HepG2 (cell line): ENCODE measurements at regions of chr22 and their contacts with region 1.

Region 1: GRCh38 chr22:50293441-50294318 is 13.8 kb downstream of the PLXNB2 start:
- DNase-seq: peak; percentile 87
- ATAC-seq: peak; percentile 77
- H3K4me3 ChIP-seq: peak overlapping the region; percentile 44 to 74 (median 73); a peak in 5 of 6 replicates
- H3K27ac ChIP-seq: peak overlapping the region; percentile 94
- H3K4me1 ChIP-seq: peaks cover 65% of the 10 kb centered on the region
- H3K27me3 ChIP-seq: no peaks in the 10 kb centered on the region
- CTCF ChIP-seq: peak; percentile 54
- EP300 ChIP-seq: peak; percentile 34 to 71; a peak in 3 of 4 replicates
- POLR2A ChIP-seq: peak; percentile 72 to 76
- RAD21 ChIP-seq: peak; percentile 62

Region 2: DNA sequence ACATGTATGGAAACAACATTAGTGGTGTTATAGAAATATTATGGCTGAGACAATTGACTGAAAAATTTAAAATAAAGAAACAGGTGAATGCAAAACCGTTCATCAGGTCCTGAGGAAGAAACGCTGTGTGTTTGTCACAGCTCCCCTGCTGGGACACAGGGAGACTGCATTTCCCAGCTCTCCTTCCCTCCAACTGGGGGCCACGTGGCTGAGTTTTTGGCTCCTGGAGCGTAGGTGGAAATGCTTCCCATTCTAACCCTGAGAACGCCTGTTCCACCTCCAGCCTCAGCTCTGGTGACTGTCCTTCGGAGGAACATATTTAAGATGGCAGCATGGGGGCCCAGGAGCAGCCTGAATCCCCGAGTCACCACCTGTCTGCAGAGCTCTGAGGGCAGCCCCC is 864.6 kb before region 1 on chr22:
- CTCF ChIA-PET with region 1: no interaction called
- POLR2A ChIA-PET with region 1: no interaction called
- in situ Hi-C with region 1: no loop called
- intact Hi-C with region 1: loop called (anchors 10 kb)
- DNase-seq: no peak
- ATAC-seq: peak; percentile 51; the same call in 2 of the 3 replicates
- H3K4me3 ChIP-seq: no peak overlapping the region
- H3K27ac ChIP-seq: no peak overlapping the region
- H3K4me1 ChIP-seq: no peaks in the 10 kb centered on the region
- H3K27me3 ChIP-seq: peaks cover 5 to 32% of the 10 kb centered on the region in 2 experiments
- CTCF ChIP-seq: no peak
- EP300 ChIP-seq: no peak
- POLR2A ChIP-seq: no peak
- RAD21 ChIP-seq: no peak

Region 3: GRCh38 chr22:50250555-50251476 is 42.9 kb before region 1 on chr22 and contains the start of gene HDAC10:
- CTCF ChIA-PET with region 1: no interaction called
- POLR2A ChIA-PET with region 1: interaction called, 11 read pairs
- in situ Hi-C with region 1: no loop called
- intact Hi-C with region 1: no loop called
- DNase-seq: peak; percentile 56
- ATAC-seq: peak; percentile 83
- H3K4me3 ChIP-seq: peak within 1 kb of the TSS; percentile 68 to 92 (median 84)
- H3K27ac ChIP-seq: peak within 1 kb of the TSS; percentile 76
- H3K4me1 ChIP-seq: peaks cover 45% of the 10 kb centered on the region
- H3K27me3 ChIP-seq: no peaks in the 10 kb centered on the region
- CTCF ChIP-seq: 0 out of 2 replicates have a peak, but pooled peaks have one; percentile 2
- EP300 ChIP-seq: no peak
- POLR2A ChIP-seq: peak; percentile 44 to 75; a peak in 3 of 4 replicates
- RAD21 ChIP-seq: peak; percentile 60
- total RNA-seq, gene HDAC10: 4.0 and 13.9 TPM in 2 replicates

Region 4: DNA sequence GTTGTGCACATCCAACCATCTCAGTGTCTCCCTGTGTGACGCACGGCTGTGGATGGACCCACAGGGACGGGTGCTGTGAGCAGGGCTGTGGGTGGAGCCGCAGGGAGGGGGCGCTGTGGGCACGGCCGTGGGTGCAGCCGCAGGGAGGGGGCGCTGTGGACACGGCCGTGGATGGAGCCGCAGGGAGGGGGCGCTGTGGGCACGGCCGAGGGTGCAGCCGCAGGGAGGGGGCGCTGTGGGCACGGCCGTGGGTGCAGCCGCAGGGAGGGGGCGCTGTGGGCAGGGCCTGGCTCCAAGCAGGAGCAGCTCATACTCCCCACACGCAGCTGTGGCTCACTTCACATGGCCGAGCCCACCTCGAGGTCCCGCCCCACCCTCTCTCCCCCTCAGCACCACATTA is 17.5 kb before region 1 on chr22:
- CTCF ChIA-PET with region 1: interaction called, 10 read pairs
- POLR2A ChIA-PET with region 1: interaction called, 7 read pairs
- in situ Hi-C with region 1: no loop called
- intact Hi-C with region 1: no loop called
- DNase-seq: peak; percentile 16
- ATAC-seq: peak; percentile 27
- H3K4me3 ChIP-seq: no peak overlapping the region
- H3K27ac ChIP-seq: no peak overlapping the region
- H3K4me1 ChIP-seq: peaks cover 11% of the 10 kb centered on the region
- H3K27me3 ChIP-seq: peaks cover 0 to 3% of the 10 kb centered on the region in 2 experiments; a peak in 3 of 5 replicates
- CTCF ChIP-seq: peak; percentile 75
- EP300 ChIP-seq: no peak
- POLR2A ChIP-seq: no peak
- RAD21 ChIP-seq: peak; percentile 21; the same call in 1 of the 2 replicates

Region 5: GRCh38 chr22:50306753-50307749 is 13.4 kb after region 1 on chr22 and contains the start of gene PLXNB2:
- CTCF ChIA-PET with region 1: no interaction called
- POLR2A ChIA-PET with region 1: interaction called, 126 read pairs
- in situ Hi-C with region 1: no loop called
- intact Hi-C with region 1: loop called (anchors 1 kb)
- DNase-seq: peak; percentile 68
- ATAC-seq: no peak
- H3K4me3 ChIP-seq: peak within 1 kb of the TSS; percentile 90 to 95 (median 95)
- H3K27ac ChIP-seq: peak within 1 kb of the TSS; percentile 67
- H3K4me1 ChIP-seq: peaks cover 82% of the 10 kb centered on the region
- H3K27me3 ChIP-seq: no peaks in the 10 kb centered on the region
- CTCF ChIP-seq: no peak
- EP300 ChIP-seq: no peak
- POLR2A ChIP-seq: peak in 1 of 2 experiments; percentile 67; a peak in 2 of 4 replicates
- RAD21 ChIP-seq: no peak
- total RNA-seq, gene PLXNB2: 19.3 and 32.6 TPM in 2 replicates

Region 6: GRCh38 chr22:50326959-50327710 is 33.5 kb after region 1 on chr22 and contains the start of gene DENND6B:
- CTCF ChIA-PET with region 1: interaction called, 9 read pairs
- POLR2A ChIA-PET with region 1: interaction called, 24 read pairs
- in situ Hi-C with region 1: no loop called
- intact Hi-C with region 1: loop called (anchors 5 kb)
- DNase-seq: peak; percentile 45
- ATAC-seq: peak; percentile 81
- H3K4me3 ChIP-seq: peak within 1 kb of the TSS; percentile 69 to 83 (median 81)
- H3K27ac ChIP-seq: peak within 1 kb of the TSS; percentile 77
- H3K4me1 ChIP-seq: peaks cover 65% of the 10 kb centered on the region
- H3K27me3 ChIP-seq: no peaks in the 10 kb centered on the region; a peak in 1 of 5 replicates
- CTCF ChIP-seq: peak; percentile 54; the same call in 1 of the 2 replicates
- EP300 ChIP-seq: no peak
- POLR2A ChIP-seq: peak; percentile 75 to 77
- RAD21 ChIP-seq: peak; percentile 99
- total RNA-seq, gene DENND6B: 0.84 and 0.95 TPM in 2 replicates